Calu3 (cell line): ENCODE measurements at regions of chr14 and their contacts with region 1.

Region 1: GRCh38 chr14:34322940-34323418 is 139.1 kb downstream of the SPTSSA start:
- DNase-seq: peak; percentile 79
- H3K4me3 Mint-ChIP-seq: no peak overlapping the region
- H3K27ac Mint-ChIP-seq: no peak overlapping the region
- H3K4me1 Mint-ChIP-seq: no peaks in the 10 kb centered on the region
- H3K27me3 Mint-ChIP-seq: peaks cover 40% of the 10 kb centered on the region
- CTCF ChIP-seq: peak; percentile 37

Region 2: DNA sequence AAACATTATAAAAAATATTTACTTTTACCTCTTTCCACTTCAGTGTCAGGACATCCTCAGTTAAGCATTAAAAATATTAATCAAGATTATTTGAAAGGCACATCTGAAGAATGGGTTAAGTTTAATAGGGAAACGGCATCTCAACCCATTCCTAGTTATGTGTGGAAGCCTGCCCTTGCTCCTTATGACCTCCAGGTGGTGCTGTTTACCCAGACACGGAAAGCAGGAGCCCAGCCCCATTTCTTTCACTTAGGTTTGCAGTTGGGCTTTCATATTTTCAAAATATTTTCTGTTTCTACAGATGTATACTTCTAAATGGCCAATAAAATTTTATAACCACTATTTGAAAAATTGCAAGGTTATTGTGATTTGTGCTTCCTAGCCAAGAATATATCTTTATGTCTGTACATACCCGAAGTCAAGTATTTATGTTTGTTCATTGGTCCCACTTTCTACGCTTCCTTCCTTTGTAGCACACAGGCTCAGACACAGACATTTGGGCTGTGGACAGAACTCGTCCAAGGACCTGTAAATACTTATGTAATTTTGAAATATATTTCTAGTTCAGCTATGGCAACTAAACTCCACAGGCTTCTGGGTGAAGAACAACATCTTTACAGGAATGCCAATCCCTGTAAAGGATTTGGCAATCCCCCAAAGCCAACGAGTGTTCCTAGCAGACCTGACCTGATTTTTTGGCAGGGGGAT is 1746.7 kb before region 1 on chr14:
- CTCF ChIA-PET with region 1: no interaction called
- intact Hi-C with region 1: loop called (anchors 2 kb)
- DNase-seq: peak; percentile 51
- H3K4me3 Mint-ChIP-seq: no peak overlapping the region
- H3K27ac Mint-ChIP-seq: no peak overlapping the region
- H3K4me1 Mint-ChIP-seq: peaks cover 10% of the 10 kb centered on the region
- H3K27me3 Mint-ChIP-seq: peaks cover 37% of the 10 kb centered on the region
- CTCF ChIP-seq: peak; percentile 70

Region 3: GRCh38 chr14:32710731-32711680 is 1612.0 kb before region 1 on chr14:
- CTCF ChIA-PET with region 1: no interaction called
- intact Hi-C with region 1: loop called (anchors 10 kb)
- DNase-seq: peak; percentile 32
- H3K4me3 Mint-ChIP-seq: no peak overlapping the region
- H3K27ac Mint-ChIP-seq: no peak overlapping the region
- H3K4me1 Mint-ChIP-seq: no peaks in the 10 kb centered on the region
- H3K27me3 Mint-ChIP-seq: peaks cover 28% of the 10 kb centered on the region
- CTCF ChIP-seq: peak; percentile 39

Region 4: GRCh38 chr14:33475623-33476022 is 847.4 kb before region 1 on chr14:
- CTCF ChIA-PET with region 1: no interaction called
- intact Hi-C with region 1: loop called (anchors 1 kb)
- DNase-seq: peak; percentile 58
- H3K4me3 Mint-ChIP-seq: no peak overlapping the region
- H3K27ac Mint-ChIP-seq: no peak overlapping the region
- H3K4me1 Mint-ChIP-seq: no peaks in the 10 kb centered on the region
- H3K27me3 Mint-ChIP-seq: peaks cover 72% of the 10 kb centered on the region
- CTCF ChIP-seq: peak; percentile 44

Region 5: DNA sequence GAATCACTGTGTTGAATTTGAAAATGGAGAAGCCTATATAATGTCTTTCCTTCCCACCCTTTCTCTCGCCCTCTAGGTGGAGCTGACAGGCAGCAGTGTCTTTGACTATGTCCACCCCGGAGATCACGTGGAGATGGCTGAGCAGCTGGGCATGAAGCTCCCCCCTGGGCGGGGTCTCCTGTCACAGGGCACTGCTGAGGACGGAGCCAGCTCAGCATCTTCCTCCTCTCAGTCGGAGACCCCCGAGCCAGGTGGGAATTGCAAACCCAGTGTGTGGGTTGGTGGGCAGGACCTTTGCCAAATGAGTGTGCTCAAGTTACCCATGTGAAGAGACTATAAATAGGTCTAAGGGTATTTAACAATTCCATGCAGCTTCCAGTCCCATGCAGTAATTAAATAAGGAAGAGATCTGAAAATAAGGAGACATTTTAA is 646.8 kb before region 1 on chr14:
- CTCF ChIA-PET with region 1: interaction called, 3 read pairs
- intact Hi-C with region 1: loop called (anchors 5 kb)
- DNase-seq: peak; percentile 53
- H3K4me3 Mint-ChIP-seq: no peak overlapping the region
- H3K27ac Mint-ChIP-seq: no peak overlapping the region
- H3K4me1 Mint-ChIP-seq: no peaks in the 10 kb centered on the region
- H3K27me3 Mint-ChIP-seq: peaks cover 21% of the 10 kb centered on the region
- CTCF ChIP-seq: no peak

Region 6: DNA sequence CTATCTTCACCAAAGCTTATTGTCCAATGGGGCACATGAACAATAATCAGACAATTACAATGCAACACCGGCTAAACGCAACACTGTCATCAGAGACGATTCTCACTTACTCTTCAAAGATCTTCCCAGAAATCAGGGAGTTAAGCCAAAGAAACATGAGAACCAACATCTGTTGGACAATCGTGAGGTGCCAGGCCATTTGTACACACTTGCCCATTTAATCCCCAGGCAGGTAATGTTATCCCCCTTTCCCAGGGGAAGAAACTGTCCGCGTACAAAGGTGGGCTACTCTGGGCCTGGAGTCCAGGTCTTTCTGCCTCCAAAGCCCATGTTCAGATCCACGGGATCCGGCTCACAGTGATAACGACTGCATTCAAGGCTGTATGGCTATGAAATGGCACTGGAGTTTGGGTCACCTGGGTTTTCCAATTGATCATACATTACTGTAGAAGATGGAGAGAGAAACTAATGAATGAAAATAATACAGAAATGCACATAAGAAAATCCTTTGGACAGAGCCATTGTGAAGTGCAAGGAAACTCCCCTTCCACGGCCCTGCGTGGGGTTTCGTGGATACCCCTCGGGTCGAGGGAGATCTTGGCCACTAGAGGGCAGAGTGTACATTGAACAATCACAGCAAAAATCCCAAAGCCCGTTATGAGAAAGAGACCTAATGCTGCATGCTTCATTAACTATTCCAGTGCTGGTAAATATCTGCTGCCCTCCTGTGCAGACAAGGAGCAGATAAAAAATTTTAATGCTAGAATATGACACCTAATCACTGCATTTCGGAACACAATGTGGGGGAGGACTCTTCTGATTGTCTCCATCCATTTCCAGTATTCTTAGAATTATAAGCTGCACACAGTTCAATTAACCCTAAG is 483.5 kb before region 1 on chr14:
- CTCF ChIA-PET with region 1: interaction called, 6 read pairs
- intact Hi-C with region 1: loop called (anchors 5 kb)
- DNase-seq: peak; percentile 46
- H3K4me3 Mint-ChIP-seq: no peak overlapping the region
- H3K27ac Mint-ChIP-seq: no peak overlapping the region
- H3K4me1 Mint-ChIP-seq: no peaks in the 10 kb centered on the region
- H3K27me3 Mint-ChIP-seq: no peaks in the 10 kb centered on the region
- CTCF ChIP-seq: peak; percentile 80